Heart right ventricle (tissue), 16 donors: ENCODE measurements at regions of chr16 and their contacts with region 1.

Region 1: GRCh38 chr16:75506567-75506966 is 11.3 kb upstream of the CHST6 start:
- DNase-seq: peak in 1 of 2 donors; percentile 24
- ATAC-seq: peak; percentile 52 to 87 (median 66)
- H3K4me3 ChIP-seq: no peak overlapping the region
- H3K27ac ChIP-seq: peak overlapping the region in 6 of 10 donors; percentile 19 to 60 (median 38)
- H3K4me1 ChIP-seq: peaks cover 0 to 13% (median 0%) of the 10 kb centered on the region in 9 donors
- H3K27me3 ChIP-seq: no peaks in the 10 kb centered on the region
- CTCF ChIP-seq: no peak

Region 2: GRCh38 chr16:75541236-75541635 is 34.7 kb after region 1 on chr16:
- intact Hi-C with region 1: loop called in 1 of 10 experiments (anchors 5 kb)
- DNase-seq: no peak
- ATAC-seq: no peak
- H3K4me3 ChIP-seq: no peak overlapping the region
- H3K27ac ChIP-seq: no peak overlapping the region
- H3K4me1 ChIP-seq: peaks cover 0 to 13% (median 4%) of the 10 kb centered on the region in 9 donors
- H3K27me3 ChIP-seq: no peaks in the 10 kb centered on the region
- CTCF ChIP-seq: no peak

Region 3: GRCh38 chr16:75667503-75667902 is 160.9 kb after region 1 on chr16:
- intact Hi-C with region 1: no loop called
- DNase-seq: no peak
- ATAC-seq: no peak
- H3K4me3 ChIP-seq: no peak overlapping the region
- H3K27ac ChIP-seq: no peak overlapping the region
- H3K4me1 ChIP-seq: peaks cover 0 to 1% (median 0%) of the 10 kb centered on the region in 9 donors
- H3K27me3 ChIP-seq: no peaks in the 10 kb centered on the region
- CTCF ChIP-seq: no peak